Prostate gland (tissue), 2 donors: ENCODE measurements at regions of chr7 and their contacts with region 1.

Region 1: DNA sequence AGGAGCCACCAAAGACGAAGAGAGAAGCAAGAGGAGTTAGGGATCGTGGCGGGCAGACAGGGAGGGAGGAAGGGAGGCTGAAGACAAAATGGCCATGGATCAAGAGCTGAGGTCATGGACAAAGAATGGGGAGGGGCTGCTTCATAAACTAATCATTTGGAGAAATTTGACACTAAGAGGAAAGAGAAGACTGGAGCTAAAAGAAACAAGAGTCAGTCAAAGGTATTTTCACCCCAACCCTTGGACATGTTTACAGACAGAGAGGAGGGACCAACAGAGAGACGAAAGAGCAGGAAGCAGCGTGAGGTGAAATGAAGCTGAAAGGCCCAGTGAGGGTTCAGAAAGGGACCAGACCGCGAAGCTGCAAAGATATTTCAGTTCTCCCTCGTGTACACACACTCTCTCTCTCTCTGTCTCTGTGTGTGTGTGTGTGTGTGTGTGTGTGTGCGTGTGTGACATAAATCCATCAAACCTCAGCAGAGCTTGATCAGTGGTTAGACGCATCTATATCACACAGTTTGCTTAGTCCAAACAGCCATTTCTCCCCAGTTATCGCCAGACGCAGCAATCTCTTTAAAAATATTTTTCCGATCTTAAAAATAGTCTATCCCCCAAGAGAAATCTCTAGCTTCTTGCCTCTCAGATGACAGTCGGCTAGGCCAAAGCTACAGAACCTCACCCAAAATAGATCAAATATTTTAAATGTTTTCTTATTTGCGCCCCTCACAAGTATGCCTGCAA is 12.5 kb upstream of the CALD1 start:
- DNase-seq: no peak
- H3K4me3 ChIP-seq: no peak overlapping the region
- H3K27ac ChIP-seq: peak overlapping the region in 1 of 2 donors; percentile 17
- H3K4me1 ChIP-seq: no peaks in the 10 kb centered on the region
- H3K27me3 ChIP-seq: no peaks in the 10 kb centered on the region
- CTCF ChIP-seq: no peak
- POLR2A ChIP-seq: no peak

Region 2: DNA sequence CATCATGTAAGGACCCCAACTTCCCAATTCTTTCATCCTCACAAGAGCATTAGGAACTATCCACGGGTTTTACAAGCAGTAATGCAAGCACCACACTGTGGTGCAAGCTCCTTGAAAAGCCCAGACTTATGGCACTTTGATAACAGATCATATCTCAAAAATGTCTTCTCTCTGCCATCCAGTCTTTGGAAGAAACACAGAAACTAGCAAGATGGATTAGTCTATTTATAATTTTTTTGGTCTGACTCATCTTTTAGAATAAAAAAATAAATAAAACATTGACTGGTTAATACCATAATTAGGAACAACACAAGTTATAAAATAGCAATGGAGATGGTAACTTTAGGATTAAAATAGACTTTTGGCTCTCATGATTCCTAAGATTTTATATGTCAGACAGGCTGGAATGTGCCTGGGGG is 36.5 kb before region 1 on chr7:
- intact Hi-C with region 1: loop called (anchors 5 kb)
- DNase-seq: no peak
- H3K4me3 ChIP-seq: no peak overlapping the region
- H3K27ac ChIP-seq: peak overlapping the region; percentile 69 to 72
- H3K4me1 ChIP-seq: no peaks in the 10 kb centered on the region
- H3K27me3 ChIP-seq: no peaks in the 10 kb centered on the region
- CTCF ChIP-seq: no peak
- POLR2A ChIP-seq: no peak